Common myeloid progenitor, CD34-positive (primary cell): ENCODE measurements at regions of chr18 and their contacts with region 1.

Region 1: DNA sequence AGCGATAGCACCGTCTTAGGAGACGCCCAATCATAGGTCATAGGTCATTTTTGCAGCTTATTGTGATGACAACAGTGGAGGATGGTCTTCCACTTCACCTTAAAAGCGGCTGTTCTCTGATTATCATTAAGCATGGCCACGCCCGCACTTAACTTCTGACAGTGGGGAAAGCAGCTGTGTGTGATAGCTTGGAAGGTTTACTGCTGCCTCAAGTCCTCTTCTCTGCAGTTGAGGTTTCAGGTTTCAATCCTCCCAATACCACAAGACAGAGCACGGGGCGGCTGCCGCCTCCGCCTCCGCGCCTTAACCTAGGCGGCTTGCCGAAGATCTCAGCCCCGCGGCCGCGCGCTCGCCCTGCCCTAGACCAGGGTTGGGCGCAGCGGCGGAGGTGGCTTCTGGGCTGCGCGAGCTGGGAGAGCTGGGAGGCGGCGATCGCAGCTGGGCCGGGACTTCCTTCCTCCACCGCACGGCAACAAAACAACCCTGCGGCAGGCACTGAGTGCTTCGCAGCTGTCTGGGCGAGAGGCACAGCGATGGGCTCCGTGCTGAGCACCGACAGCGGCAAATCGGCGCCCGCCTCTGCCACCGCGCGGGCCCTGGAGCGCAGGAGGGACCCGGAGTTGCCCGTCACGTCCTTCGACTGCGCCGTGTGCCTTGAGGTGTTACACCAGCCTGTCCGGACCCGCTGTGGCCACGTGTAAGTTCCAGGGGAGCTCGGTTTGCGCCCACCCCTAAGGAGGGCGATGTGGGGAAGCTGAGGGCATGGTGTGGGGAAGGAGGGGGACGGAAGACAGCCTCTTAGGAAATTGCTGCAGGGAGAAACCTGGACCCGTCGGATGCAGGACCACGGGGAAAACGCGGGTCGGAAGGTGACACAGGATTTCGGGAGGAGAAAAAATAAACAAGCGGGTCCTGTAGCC is at the start of gene RNF125:
- DNase-seq: peak; percentile 91 to 98 (median 96)
- H3K4me3 ChIP-seq: peak within 1 kb of the TSS; percentile 67 to 98 (median 87)
- H3K27ac ChIP-seq: peak within 1 kb of the TSS; percentile 74 to 84
- H3K4me1 ChIP-seq: peaks cover 15 to 46% (median 39%) of the 10 kb centered on the region in 4 experiments
- H3K27me3 ChIP-seq: no peaks in the 10 kb centered on the region

Region 2: GRCh38 chr18:31880186-31880898 is 138.2 kb before region 1 on chr18:
- CTCF ChIA-PET with region 1: no interaction called
- POLR2A ChIA-PET with region 1: no interaction called
- DNase-seq: no peak
- H3K4me3 ChIP-seq: no peak overlapping the region
- H3K27ac ChIP-seq: no peak overlapping the region
- H3K4me1 ChIP-seq: no peaks in the 10 kb centered on the region
- H3K27me3 ChIP-seq: no peaks in the 10 kb centered on the region

Region 3: DNA sequence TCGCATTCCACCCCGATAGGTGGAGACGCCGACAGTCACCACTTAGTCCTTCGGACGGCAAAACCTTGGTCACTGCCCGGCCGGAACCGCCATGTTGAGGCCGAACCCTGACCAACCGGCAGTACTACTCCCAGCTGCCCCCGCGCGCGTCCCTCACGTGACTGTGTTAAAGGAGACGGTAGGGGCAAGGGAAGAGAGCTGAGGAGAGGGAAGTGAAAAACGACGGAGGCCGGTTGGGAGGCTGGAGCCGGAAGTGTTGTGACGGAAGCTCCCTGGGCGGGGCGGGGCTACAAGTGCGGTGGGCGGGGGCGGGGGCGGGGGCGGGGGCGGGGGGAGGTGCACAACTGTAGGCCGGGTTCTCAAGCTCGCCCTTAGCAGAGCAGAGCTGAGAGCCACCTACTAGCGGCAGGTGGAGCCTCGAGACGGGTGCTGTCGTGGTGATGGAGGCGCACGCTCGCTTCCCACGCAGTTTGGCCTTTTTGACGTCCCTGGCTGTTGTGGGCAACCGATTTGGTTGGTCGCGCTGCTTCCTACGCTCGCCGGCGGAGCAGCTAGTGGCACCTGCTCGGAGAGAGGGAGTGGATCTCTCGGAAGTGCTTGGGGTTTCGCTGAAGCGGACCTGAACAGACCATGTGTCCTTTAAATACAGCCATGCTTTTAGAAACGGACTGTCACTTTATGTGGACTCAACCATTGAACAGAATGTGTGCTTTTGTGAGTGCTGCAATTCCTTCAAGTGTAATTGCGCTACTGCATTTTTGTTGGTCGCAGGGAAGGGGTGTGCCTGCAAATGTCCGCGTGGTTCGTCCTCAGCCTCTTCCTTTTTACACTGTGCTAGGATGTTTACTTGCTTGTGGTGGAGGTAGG is 75.4 kb before region 1 on chr18 and contains the start of gene TRAPPC8:
- CTCF ChIA-PET with region 1: interaction called, 18 read pairs
- POLR2A ChIA-PET with region 1: interaction called, 8 read pairs
- DNase-seq: peak; percentile 97 to 98 (median 98)
- H3K4me3 ChIP-seq: peak within 1 kb of the TSS; percentile 86 to 99 (median 97)
- H3K27ac ChIP-seq: peak within 1 kb of the TSS; percentile 96 to 98
- H3K4me1 ChIP-seq: peaks cover 11 to 37% (median 22%) of the 10 kb centered on the region in 4 experiments
- H3K27me3 ChIP-seq: no peaks in the 10 kb centered on the region

Region 4: GRCh38 chr18:32040936-32041335 is 22.3 kb after region 1 on chr18:
- CTCF ChIA-PET with region 1: interaction called, 21 read pairs
- POLR2A ChIA-PET with region 1: interaction called, 5 read pairs
- DNase-seq: peak; percentile 88 to 98 (median 97)
- H3K4me3 ChIP-seq: peak overlapping the region in 5 of 7 experiments; percentile 17 to 71 (median 47)
- H3K27ac ChIP-seq: peak overlapping the region; percentile 61 to 88
- H3K4me1 ChIP-seq: peaks cover 27 to 59% (median 50%) of the 10 kb centered on the region in 4 experiments
- H3K27me3 ChIP-seq: no peaks in the 10 kb centered on the region

Region 5: DNA sequence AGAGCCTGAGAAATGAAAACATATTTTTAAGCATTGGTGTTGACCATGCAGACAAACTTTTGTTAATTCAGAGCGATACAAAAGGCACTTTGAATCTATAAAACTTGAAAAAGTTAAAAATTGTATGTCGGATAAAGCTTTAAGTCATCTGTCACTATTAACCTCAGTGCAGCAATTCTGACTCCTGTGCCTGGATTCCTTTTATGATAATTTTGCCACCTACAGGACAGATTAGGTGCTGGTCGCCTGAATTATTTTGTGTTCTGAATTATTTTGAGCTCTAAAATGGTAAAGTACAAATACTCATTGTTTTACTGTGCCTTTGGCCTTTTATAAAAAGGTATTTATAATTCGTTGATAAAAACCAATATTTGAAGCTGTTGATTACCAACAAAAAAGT is 53.7 kb after region 1 on chr18:
- CTCF ChIA-PET with region 1: interaction called, 36 read pairs
- POLR2A ChIA-PET with region 1: interaction called, 15 read pairs
- DNase-seq: peak; percentile 48 to 76 (median 73)
- H3K4me3 ChIP-seq: no peak overlapping the region
- H3K27ac ChIP-seq: no peak overlapping the region
- H3K4me1 ChIP-seq: no peaks in the 10 kb centered on the region
- H3K27me3 ChIP-seq: no peaks in the 10 kb centered on the region

Region 6: DNA sequence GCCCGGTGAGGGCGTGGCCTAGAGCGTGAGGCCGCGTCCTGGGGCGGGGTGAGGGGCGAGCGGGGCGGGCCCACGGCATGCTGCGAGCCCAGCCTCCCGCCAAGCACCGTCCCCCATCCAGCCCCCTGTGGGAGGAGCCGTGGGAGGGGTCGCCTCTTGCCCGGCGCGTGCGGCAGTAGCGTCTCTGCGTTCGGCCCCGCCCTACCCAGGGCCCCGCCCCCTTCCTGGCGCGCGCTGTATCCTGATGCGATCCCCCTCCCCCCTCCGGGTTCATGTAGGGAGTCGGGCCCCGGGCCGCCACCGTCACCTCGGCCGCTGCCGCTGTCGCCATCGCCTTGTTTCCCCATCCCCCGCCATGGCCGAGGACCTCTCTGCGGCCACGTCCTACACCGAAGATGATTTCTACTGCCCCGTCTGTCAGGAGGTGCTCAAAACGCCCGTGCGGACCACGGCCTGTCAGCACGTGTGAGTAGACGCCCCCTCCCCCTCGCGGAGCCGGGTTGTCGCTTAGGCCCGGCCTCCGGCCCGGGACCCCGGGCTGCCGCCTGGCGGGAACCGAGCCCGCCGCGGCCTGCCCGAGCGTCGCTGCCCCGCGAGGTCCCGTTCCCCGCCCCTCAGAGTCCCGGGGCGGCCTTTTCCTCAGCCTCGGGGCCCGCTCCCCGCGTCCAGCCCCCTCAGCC is 74.0 kb after region 1 on chr18:
- CTCF ChIA-PET with region 1: interaction called, 4 read pairs
- POLR2A ChIA-PET with region 1: interaction called, 10 read pairs
- DNase-seq: peak; percentile 96 to 98 (median 98)
- H3K4me3 ChIP-seq: peak overlapping the region; percentile 69 to 95 (median 86)
- H3K27ac ChIP-seq: peak overlapping the region; percentile 92 to 97
- H3K4me1 ChIP-seq: peaks cover 11 to 39% (median 28%) of the 10 kb centered on the region in 4 experiments
- H3K27me3 ChIP-seq: no peaks in the 10 kb centered on the region